Ovary (tissue), 10 donors: ENCODE measurements at regions of chr17 and their contacts with region 1.

Region 1: DNA sequence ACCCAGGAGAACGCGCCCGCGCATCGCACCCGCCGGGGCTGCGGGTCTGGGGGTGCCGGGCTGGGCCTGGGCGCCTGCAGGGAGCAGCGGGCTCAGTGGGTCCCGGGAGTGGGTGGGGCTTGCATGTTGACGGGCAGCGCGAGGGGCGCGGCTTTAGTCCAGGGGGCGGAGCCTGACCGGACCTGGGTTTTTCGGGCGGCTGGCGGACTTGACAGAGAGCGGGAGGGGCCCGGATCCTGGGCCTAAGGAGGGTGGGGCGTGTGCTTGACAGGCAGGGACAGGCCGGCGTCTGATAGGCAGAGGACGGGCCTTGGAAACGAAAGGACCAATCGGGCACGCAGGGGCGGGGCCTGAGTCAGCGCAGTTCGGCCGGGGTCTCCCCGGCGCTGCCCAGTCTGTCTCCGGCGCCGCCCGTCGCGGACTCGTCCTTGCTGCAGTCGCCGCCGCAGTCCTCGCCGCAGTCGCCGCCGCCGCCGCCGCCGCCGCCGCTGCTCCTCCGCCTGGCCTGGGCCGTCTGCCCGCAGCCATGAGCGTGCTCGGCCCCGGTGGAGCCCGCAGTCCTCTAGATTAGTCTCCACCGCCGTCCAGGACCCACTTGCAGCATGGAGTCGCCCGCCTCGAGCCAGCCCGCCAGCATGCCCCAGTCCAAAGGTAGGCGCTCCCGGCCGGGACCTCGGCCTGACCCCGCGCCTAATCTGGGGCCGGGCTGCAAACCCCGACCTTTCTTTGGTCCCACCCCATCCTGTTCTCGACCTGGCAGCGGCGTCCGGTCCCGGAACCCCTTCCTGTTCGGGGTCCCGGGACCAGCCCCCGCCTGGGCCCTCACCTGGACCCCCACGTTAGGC is at the start of gene MAP2K3:
- DNase-seq: peak; percentile 99
- H3K4me3 ChIP-seq: peak within 1 kb of the TSS; percentile 57
- H3K27ac ChIP-seq: peak within 1 kb of the TSS; percentile 1 to 65
- H3K4me1 ChIP-seq: peaks cover 24% of the 10 kb centered on the region
- H3K27me3 ChIP-seq: no peaks in the 10 kb centered on the region
- CTCF ChIP-seq: no peak
- EP300 ChIP-seq: no peak
- POLR2A ChIP-seq: peak; percentile 80
- total RNA-seq, gene MAP2K3: 9.1 to 45.5 (median 18.9) TPM

Region 2: DNA sequence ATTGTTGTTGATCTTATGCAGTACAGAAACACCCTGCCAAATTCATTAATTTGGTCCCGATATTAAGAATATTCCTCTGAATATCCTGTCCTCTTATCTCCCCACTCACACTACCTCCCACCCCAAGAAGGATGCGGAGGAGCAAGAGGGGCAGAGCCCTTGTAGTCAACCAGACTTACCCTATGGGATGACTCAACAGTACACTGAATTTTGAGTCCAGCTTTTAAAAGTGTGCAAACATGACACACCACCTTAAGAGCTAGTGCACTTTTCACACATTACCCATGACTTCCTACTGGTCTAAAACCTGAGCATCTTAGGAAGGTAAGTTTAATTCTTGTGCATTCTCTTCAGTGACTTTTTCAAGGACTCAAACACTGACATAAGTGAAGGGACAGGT is 251.2 kb before region 1 on chr17:
- intact Hi-C with region 1: no loop called
- DNase-seq: no peak
- H3K4me3 ChIP-seq: no peak overlapping the region
- H3K27ac ChIP-seq: no peak overlapping the region
- H3K4me1 ChIP-seq: peaks cover 40% of the 10 kb centered on the region
- H3K27me3 ChIP-seq: no peaks in the 10 kb centered on the region
- CTCF ChIP-seq: no peak
- EP300 ChIP-seq: no peak
- POLR2A ChIP-seq: no peak

Region 3: GRCh38 chr17:21043286-21044232 is 241.0 kb before region 1 on chr17:
- intact Hi-C with region 1: loop called in 1 of 4 experiments (anchors 10 kb)
- DNase-seq: peak; percentile 97 to 99 (median 98)
- H3K4me3 ChIP-seq: peak overlapping the region; percentile 82
- H3K27ac ChIP-seq: peak overlapping the region; percentile 89 to 96
- H3K4me1 ChIP-seq: peaks cover 8% of the 10 kb centered on the region
- H3K27me3 ChIP-seq: no peaks in the 10 kb centered on the region
- CTCF ChIP-seq: peak; percentile 80 to 95 (median 95)
- EP300 ChIP-seq: no peak
- POLR2A ChIP-seq: peak; percentile 75

Region 4: DNA sequence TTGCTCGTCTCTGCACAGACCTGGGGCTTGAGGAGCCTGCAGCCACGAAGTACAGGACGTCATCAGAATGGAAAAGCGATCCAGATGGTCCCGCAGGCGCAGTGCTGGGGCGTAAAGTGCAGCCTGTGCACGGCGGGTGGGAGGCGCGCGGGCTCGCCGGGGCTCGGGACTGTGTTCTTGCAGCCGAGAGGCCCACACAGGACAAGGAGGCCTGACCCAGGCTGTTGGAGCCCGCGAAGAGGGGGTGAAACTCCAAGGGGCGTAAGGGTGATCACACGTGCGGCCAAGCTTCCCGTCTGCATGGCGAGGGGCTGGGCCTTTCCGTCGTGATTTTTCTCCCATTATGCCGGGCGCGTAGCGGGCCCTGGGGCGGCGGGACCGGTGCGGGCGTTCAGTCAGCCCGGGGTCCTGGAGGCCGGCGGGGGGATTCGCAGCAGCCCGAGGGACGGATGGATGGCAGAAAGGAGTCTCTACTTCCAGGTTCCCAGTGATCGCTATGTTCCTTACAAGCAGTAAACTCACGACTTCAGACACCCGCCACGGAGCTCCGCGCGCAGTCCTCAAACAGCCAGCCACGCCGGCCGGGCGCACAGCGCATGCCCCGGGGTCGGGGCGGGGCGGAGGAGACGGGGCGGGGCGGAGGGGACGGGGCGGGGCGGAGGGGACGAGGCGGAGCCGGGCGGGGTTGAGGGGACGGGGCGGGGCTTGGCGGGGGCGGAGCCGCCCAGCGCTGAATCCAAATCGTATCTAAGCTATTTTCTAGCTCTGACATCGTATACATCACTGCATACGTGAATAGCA is 266.7 kb after region 1 on chr17:
- intact Hi-C with region 1: no loop called
- DNase-seq: peak; percentile 77 to 89 (median 84)
- H3K4me3 ChIP-seq: peak overlapping the region; percentile 88
- H3K27ac ChIP-seq: peak overlapping the region; percentile 76 to 82
- H3K4me1 ChIP-seq: peaks cover 3% of the 10 kb centered on the region
- H3K27me3 ChIP-seq: no peaks in the 10 kb centered on the region
- CTCF ChIP-seq: no peak
- EP300 ChIP-seq: no peak
- POLR2A ChIP-seq: peak; percentile 59